Right ventricle myocardium superior (tissue), 1 donor: ENCODE measurements at regions of chr11 and their contacts with region 1.

Region 1: GRCh38 chr11:68030318-68031138 is at the start of gene NDUFS8:
- DNase-seq: peak; percentile 99
- ATAC-seq: peak; percentile 92
- total RNA-seq, gene NDUFS8: 474 TPM

Region 2: GRCh38 chr11:68121067-68121899 is 90.8 kb after region 1 on chr11 and contains the start of gene CHKA:
- intact Hi-C with region 1: loop called (anchors 10 kb)
- DNase-seq: peak; percentile 96
- ATAC-seq: peak; percentile 96
- total RNA-seq, gene CHKA: 8.4 TPM

Region 3: DNA sequence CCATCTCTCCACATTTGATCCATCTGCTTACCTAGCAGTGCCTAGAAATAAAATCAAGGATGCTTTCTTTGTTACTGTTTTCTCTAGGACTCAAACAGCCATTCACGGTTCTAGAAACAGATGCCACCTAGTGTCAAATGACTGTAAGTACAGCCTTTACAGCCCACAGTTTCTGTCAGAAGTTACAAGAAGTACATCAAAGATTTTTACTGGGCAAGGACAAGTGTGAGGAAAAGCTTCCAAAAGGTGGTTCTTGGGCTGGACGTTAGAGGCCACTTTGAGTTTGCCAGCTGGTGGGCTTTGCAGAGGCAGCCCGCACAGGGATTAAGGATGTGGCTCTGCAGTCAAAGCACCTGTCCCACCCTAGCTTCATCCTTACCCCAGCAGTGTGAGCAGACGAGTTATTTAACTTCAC is 175.7 kb after region 1 on chr11:
- intact Hi-C with region 1: no loop called
- DNase-seq: no peak
- ATAC-seq: peak; percentile 66